ENCODE measurements at regions of chr6 and their contacts with region 1.

Region 1: DNA sequence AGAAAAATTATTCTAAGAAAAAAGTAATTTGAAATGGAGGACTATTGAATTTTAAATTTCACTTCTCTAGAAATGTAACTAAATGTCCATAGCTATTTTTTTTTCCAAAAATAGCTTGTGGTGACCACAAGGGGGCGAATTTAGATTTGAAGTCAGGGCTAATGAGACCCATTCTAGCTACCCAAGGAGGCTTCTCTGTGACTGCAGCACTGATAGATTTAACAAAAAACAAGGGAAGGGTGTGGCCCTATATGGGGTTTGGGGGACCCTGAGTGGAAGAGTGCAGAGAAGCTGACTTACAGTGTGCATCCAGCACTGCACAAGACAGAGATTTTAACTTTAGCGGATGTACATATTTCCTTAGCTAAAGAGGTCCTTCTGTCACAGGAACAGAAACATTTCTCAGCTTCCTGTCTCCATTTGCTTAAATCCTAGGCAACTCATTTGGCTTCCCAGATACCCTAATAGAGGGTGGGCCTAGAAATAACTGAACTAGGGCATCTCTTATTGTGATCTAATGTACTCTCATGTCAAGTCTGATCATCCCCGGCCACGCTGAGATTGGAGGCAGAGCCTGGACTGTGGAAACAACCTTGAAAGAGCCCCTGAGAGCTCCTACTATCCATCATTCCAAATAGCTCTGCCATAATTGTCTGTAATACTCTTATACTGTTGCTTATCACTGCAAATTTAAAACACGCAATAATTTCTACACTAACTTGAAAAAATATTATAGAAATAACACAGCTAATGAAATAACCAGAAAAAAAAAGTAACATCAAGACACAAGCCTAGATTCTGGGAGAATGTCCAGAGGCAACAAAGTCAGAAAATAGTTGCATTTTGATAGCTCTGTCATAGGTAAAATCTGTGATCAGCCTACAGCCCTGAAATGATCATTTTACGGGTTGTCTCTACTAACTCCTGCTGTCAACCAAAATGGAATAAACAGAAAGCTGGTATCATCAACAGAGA is 93.6 kb downstream of the SNAP91 start:
- H3K4me3 Mint-ChIP-seq: no peak overlapping the region
- H3K27ac Mint-ChIP-seq: no peak overlapping the region
- H3K4me1 Mint-ChIP-seq: no peaks in the 10 kb centered on the region
- H3K27me3 Mint-ChIP-seq: peaks cover 1% of the 10 kb centered on the region

Region 2: DNA sequence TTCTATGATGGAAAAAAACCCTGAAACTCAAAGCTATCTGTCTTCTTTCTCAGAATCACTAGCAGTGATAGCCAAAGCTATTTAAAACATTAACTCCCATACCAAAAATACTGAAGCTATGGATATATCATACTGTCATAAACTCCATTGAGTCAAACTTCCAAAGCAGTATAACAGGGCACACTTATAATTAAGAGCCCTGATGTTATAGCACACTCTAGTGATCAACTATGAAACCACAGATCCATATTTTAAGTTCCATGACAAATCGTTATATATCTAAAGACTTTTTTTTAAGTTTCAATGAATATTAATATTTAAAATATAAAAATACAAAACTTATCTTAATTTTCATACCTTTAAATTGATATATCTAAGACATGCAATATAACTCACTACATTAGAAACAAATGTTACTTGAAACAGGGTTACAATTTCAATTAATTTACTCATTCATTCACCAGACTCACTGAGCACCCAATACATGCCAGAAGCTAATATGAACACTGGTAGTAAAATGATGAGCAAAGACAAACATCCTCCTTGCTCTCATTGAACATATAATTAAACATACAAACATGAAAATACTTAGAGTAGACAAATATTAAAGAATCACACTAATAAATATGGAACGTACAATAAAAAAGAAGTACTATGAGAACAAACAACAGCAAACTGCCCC is 1437.1 kb before region 1 on chr6:
- intact Hi-C with region 1: no loop called
- H3K4me3 Mint-ChIP-seq: no peak overlapping the region
- H3K27ac Mint-ChIP-seq: no peak overlapping the region
- H3K4me1 Mint-ChIP-seq: no peaks in the 10 kb centered on the region
- H3K27me3 Mint-ChIP-seq: no peaks in the 10 kb centered on the region

Region 3: GRCh38 chr6:84220809-84221409 is 605.6 kb after region 1 on chr6:
- intact Hi-C with region 1: loop called (anchors 1 kb)
- H3K4me3 Mint-ChIP-seq: no peak overlapping the region
- H3K27ac Mint-ChIP-seq: no peak overlapping the region
- H3K4me1 Mint-ChIP-seq: peaks cover 17% of the 10 kb centered on the region
- H3K27me3 Mint-ChIP-seq: no peaks in the 10 kb centered on the region